ENCODE measurements at regions of chr5 and their contacts with region 1.

Region 1: GRCh38 chr5:154418344-154418820 is 27.4 kb upstream of the SAP30L start:
- ATAC-seq: peak in 4 of 8 experiments; percentile 23 to 80 (median 56)
- H3K4me3 ChIP-seq: no peak overlapping the region
- H3K27ac ChIP-seq: no peak overlapping the region
- H3K4me1 ChIP-seq: peaks cover 7 to 11% of the 10 kb centered on the region in 2 donors

Region 2: GRCh38 chr5:154060606-154061005 is 357.8 kb before region 1 on chr5:
- in situ Hi-C with region 1: loop called in 5 of 9 experiments (anchors 10 to 25 kb)
- ATAC-seq: no peak
- H3K4me3 ChIP-seq: no peak overlapping the region
- H3K27ac ChIP-seq: no peak overlapping the region
- H3K4me1 ChIP-seq: no peaks in the 10 kb centered on the region